Mucosa of descending colon (tissue), 3 donors: ENCODE measurements at regions of chr7 and their contacts with region 1.

Region 1: GRCh38 chr7:98168181-98168905 is 42.9 kb upstream of the BHLHA15 start:
- DNase-seq: peak in 1 of 3 donors; percentile 84
- ATAC-seq: peak; percentile 77
- H3K4me3 ChIP-seq: no peak overlapping the region
- H3K4me1 ChIP-seq: peaks cover 5% of the 10 kb centered on the region
- CTCF ChIP-seq: peak; percentile 63

Region 2: GRCh38 chr7:98021588-98022351 is 146.6 kb before region 1 on chr7:
- intact Hi-C with region 1: loop called (anchors 5 kb)
- DNase-seq: peak; percentile 74 to 94 (median 88)
- ATAC-seq: peak; percentile 96
- H3K4me3 ChIP-seq: no peak overlapping the region
- H3K4me1 ChIP-seq: no peaks in the 10 kb centered on the region
- CTCF ChIP-seq: peak; percentile 83

Region 3: GRCh38 chr7:98106647-98107445 is 61.5 kb before region 1 on chr7 and contains the start of gene LMTK2:
- intact Hi-C with region 1: loop called (anchors 5 kb)
- DNase-seq: peak; percentile 96 to 98 (median 98)
- ATAC-seq: peak; percentile 97
- H3K4me3 ChIP-seq: peak within 1 kb of the TSS; percentile 97
- H3K4me1 ChIP-seq: peaks cover 27% of the 10 kb centered on the region
- CTCF ChIP-seq: peak; percentile 91
- total RNA-seq, gene LMTK2: 48.6 to 70.2 (median 52.9) TPM